ENCODE measurements at regions of chr2 and their contacts with region 1.

Region 1: GRCh38 chr2:235314371-235314930 is 179.4 kb upstream of the AGAP1 start:
- DNase-seq: no peak
- ATAC-seq: no peak
- H3K4me3 ChIP-seq: no peak overlapping the region
- H3K27ac ChIP-seq: no peak overlapping the region
- H3K4me1 ChIP-seq: peaks cover 7% of the 10 kb centered on the region
- H3K27me3 ChIP-seq: no peaks in the 10 kb centered on the region
- CTCF ChIP-seq: no peak

Region 2: DNA sequence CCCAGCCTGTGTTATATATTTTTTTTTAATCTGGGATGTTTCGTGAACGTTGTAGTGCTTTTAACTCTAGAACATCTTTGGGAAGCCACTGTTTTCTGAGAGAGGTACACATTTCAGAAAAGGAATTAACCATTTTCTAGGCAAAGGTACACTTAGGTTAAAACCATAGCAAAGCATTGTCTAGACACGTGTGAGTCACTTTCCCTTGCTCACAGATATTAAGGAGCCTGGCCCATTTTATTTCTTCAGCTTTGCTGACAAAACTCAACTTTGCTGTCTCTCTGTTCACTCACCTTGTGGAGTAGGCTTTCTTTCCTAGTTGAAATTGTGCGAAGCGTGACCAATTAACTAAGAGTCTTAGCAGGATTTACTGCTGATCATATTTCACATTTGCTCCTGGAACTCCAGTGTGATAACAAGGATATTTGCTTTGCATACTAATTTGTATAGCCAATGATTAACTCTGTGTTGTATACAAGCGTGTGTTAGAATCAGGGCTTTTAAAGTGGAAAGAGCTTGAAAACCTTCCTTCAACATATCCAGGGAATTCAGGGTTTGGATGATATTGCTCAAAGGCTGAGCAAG is 35.6 kb before region 1 on chr2:
- CTCF ChIA-PET with region 1: no interaction called
- POLR2A ChIA-PET with region 1: no interaction called
- intact Hi-C with region 1: no loop called
- DNase-seq: no peak
- ATAC-seq: no peak
- H3K4me3 ChIP-seq: no peak overlapping the region
- H3K27ac ChIP-seq: no peak overlapping the region
- H3K4me1 ChIP-seq: no peaks in the 10 kb centered on the region
- H3K27me3 ChIP-seq: no peaks in the 10 kb centered on the region
- CTCF ChIP-seq: no peak

Region 3: GRCh38 chr2:235300368-235301201 is 13.9 kb before region 1 on chr2:
- CTCF ChIA-PET with region 1: no interaction called
- POLR2A ChIA-PET with region 1: interaction called, 11 read pairs
- intact Hi-C with region 1: no loop called
- DNase-seq: no peak
- ATAC-seq: no peak
- H3K4me3 ChIP-seq: no peak overlapping the region
- H3K27ac ChIP-seq: no peak overlapping the region
- H3K4me1 ChIP-seq: no peaks in the 10 kb centered on the region
- H3K27me3 ChIP-seq: no peaks in the 10 kb centered on the region
- CTCF ChIP-seq: no peak